HEK293T (cell line): ENCODE measurements at regions of chr5 and their contacts with region 1.

Region 1: DNA sequence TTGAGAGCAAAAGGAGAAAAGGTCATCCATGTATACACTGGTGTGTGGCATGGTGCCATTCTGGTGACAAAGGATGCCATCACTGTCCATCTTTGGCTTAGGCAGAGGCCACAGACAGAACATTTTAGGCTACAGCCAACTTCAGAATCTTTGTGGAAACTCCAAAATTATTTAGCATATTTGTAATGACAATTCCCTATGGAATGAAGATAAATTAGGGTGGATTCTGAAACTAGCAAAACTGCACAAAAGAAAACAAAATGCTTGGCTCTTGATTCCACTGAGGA is 92.5 kb downstream of the FBXW11 start:
- DNase-seq: no peak

Region 2: DNA sequence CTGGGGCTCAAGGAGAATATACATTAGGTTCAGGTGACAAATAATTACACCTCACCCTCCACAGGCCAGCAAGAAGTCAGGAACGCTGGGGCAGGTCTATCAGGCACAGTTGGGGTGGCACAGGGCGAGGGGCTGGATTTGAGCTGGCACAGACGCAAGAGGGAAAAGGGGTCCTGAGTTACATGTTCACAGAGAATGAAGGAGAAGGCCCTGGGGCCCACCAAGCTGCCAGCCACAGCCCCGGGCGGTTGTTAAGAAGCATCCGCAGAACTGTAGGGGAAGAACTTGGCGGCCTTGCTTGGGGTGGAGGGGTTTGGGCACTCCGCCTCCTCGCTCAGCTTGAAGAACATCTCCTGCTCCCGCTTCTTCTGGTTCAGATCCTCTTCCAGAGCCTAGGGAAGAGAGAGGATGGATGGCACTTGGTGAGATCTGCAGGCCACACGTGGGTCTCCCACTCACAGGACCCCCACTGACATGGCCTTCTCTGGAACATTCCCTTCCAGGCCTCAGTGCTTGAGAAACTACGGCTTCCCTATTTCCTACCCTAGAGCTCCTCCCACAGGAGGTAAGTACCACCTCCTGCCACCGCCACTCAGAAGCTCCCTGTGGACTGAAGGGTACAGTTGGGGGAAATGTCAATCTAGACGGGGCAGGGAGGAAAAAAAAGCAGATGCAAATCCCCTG is 130.8 kb after region 1 on chr5:
- CTCF ChIA-PET with region 1: interaction called, 23 read pairs
- POLR2A ChIA-PET with region 1: no interaction called
- DNase-seq: no peak

Region 3: DNA sequence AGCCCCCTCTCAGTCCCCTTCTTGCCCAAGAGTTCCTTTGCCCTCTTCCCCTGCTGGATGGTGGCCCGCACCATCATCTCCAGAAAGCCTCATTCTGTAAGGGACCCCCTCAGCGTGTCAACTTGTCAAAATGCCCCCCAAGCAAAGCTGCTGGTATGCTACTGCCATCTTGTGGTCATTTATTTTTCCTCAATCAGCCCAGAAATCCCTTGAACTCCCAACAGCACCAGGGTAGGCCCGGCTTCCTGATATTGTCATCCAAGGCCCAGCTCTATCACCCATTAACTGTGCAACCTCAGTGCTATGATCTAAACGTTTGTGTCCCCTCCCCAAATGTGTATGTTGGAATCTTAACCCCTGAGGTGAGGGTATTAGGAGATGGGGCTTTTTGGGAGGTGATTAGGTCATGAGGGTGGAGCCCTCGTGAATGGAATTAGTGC is 145.8 kb after region 1 on chr5:
- CTCF ChIA-PET with region 1: interaction called, 30 read pairs
- POLR2A ChIA-PET with region 1: interaction called, 3 read pairs
- DNase-seq: peak; percentile 61